Activated CD8-positive, alpha-beta T cell treated with anti-CD3 and anti-CD28 coated beads, Interleukin-2, amount 10 ng/mL, durations not matched to agents 7 days and 5 days (primary cell): ENCODE measurements at regions of chr4 and their contacts with region 1.

Region 1: GRCh38 chr4:6134612-6135220 is 65.6 kb downstream of the JAKMIP1 start:
- DNase-seq: peak; percentile 73
- ATAC-seq: peak; percentile 97
- H3K4me3 Mint-ChIP-seq: no peak overlapping the region
- H3K27ac Mint-ChIP-seq: peak overlapping the region; percentile 59
- H3K4me1 Mint-ChIP-seq: peaks cover 16% of the 10 kb centered on the region
- H3K27me3 Mint-ChIP-seq: peaks cover 2% of the 10 kb centered on the region

Region 2: GRCh38 chr4:5979976-5980375 is 154.7 kb before region 1 on chr4:
- CTCF ChIA-PET with region 1: no interaction called
- POLR2A ChIA-PET with region 1: no interaction called
- DNase-seq: no peak
- ATAC-seq: no peak
- H3K4me3 Mint-ChIP-seq: no peak overlapping the region
- H3K27ac Mint-ChIP-seq: no peak overlapping the region
- H3K4me1 Mint-ChIP-seq: no peaks in the 10 kb centered on the region
- H3K27me3 Mint-ChIP-seq: peaks cover 21% of the 10 kb centered on the region

Region 3: GRCh38 chr4:6200011-6200921 is 65.5 kb after region 1 on chr4 and contains the start of gene JAKMIP1:
- CTCF ChIA-PET with region 1: interaction called, 15 read pairs
- POLR2A ChIA-PET with region 1: no interaction called
- DNase-seq: peak; percentile 85
- ATAC-seq: peak; percentile 80
- H3K4me3 Mint-ChIP-seq: peak within 1 kb of the TSS; percentile 76
- H3K27ac Mint-ChIP-seq: peak within 1 kb of the TSS; percentile 60
- H3K4me1 Mint-ChIP-seq: peaks cover 35% of the 10 kb centered on the region
- H3K27me3 Mint-ChIP-seq: peaks cover 45% of the 10 kb centered on the region
- total RNA-seq, gene JAKMIP1: 9.3 to 9.6 TPM